Right cardiac atrium (tissue), 5 donors: ENCODE measurements at regions of chr2 and their contacts with region 1.

Region 1: DNA sequence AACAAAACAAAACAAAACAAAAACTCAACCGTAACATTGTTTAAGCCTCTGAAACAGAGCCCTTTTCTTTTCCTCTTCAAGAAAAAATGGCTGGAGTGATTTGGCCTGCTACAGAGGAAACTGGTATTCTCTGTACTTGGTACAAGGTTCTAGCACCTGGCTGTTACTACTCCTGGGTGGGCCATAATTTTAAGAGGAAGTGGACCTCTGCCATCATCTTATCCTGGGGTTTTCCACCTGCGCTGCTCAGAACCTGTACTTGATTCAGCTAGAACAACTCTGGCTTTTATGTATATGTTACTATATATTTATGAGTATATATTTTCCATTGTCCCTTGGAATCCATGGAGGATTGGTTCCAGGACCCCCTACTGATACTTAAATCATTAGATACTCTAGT is 22.5 kb downstream of the SRSF7 start:
- DNase-seq: no peak
- ATAC-seq: no peak
- H3K4me3 ChIP-seq: no peak overlapping the region
- H3K27ac ChIP-seq: no peak overlapping the region
- H3K4me1 ChIP-seq: no peaks in the 10 kb centered on the region
- H3K27me3 ChIP-seq: no peaks in the 10 kb centered on the region

Region 2: GRCh38 chr2:38581193-38582147 is 147.2 kb before region 1 on chr2:
- intact Hi-C with region 1: loop called (anchors 5 kb)
- DNase-seq: peak in 1 of 3 donors; percentile 53
- ATAC-seq: peak; percentile 79 to 80
- H3K4me3 ChIP-seq: no peak overlapping the region
- H3K27ac ChIP-seq: no peak overlapping the region
- H3K4me1 ChIP-seq: peaks cover 1% of the 10 kb centered on the region
- H3K27me3 ChIP-seq: no peaks in the 10 kb centered on the region